ENCODE measurements at regions of chr7 and their contacts with region 1.

Region 1: GRCh38 chr7:50711257-50712175 is 71.2 kb downstream of the GRB10 start:
- DNase-seq: no peak
- ATAC-seq: no peak
- H3K4me3 ChIP-seq: no peak overlapping the region
- H3K27ac ChIP-seq: no peak overlapping the region
- H3K4me1 ChIP-seq: no peaks in the 10 kb centered on the region
- H3K27me3 ChIP-seq: no peaks in the 10 kb centered on the region
- CTCF ChIP-seq: no peak

Region 2: GRCh38 chr7:50615519-50616080 is 95.9 kb before region 1 on chr7:
- CTCF ChIA-PET with region 1: interaction called, 13 read pairs
- POLR2A ChIA-PET with region 1: no interaction called
- in situ Hi-C with region 1: no loop called
- intact Hi-C with region 1: no loop called
- DNase-seq: no peak
- ATAC-seq: no peak
- H3K4me3 ChIP-seq: no peak overlapping the region
- H3K27ac ChIP-seq: no peak overlapping the region
- H3K4me1 ChIP-seq: no peaks in the 10 kb centered on the region
- H3K27me3 ChIP-seq: no peaks in the 10 kb centered on the region
- CTCF ChIP-seq: no peak

Region 3: GRCh38 chr7:50739744-50740435 is 28.4 kb after region 1 on chr7:
- CTCF ChIA-PET with region 1: no interaction called
- POLR2A ChIA-PET with region 1: no interaction called
- in situ Hi-C with region 1: no loop called
- intact Hi-C with region 1: no loop called
- DNase-seq: no peak
- ATAC-seq: no peak
- H3K4me3 ChIP-seq: no peak overlapping the region
- H3K27ac ChIP-seq: no peak overlapping the region
- H3K4me1 ChIP-seq: no peaks in the 10 kb centered on the region
- H3K27me3 ChIP-seq: no peaks in the 10 kb centered on the region
- CTCF ChIP-seq: no peak

Region 4: DNA sequence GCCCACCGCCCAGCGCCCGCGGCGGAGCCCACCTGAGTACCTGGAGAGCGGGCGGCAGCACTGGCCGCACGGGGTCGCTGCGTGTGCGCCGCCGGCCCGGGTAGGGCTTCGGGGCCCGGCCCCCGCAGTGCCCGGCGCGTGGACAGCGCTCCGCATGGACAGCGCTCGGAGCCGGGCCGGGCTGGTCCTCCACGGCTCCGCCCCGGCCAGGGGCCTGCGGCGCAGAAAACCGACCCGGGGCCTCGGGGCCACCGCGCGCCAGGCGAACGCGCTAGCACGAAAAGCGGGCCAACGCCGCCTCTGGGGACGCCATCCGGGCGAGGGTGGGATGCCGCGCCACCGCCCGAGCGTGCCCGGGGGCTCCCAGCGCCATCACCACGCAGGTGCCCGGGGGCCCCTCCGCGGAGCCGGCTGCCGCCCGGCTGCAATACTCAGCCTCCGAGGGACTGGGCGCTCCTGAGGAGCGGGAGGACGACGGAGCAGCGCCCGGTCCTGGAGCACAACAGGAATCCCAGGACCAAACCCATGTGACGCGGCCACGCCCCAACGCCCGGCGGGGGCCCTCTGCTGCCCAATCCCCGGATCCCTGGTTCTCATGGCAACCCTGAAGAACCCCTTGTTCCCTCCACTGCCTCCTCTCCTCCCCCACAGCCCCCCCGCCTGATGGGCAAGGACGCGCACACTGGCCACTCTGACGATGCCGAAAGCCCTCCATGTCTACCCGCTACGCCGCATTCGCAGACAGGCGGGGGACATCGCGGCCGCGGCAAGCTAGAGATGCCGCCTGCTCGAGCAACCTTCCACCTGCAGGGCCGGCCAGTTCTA is 71.1 kb after region 1 on chr7 and contains the start of gene GRB10:
- CTCF ChIA-PET with region 1: no interaction called
- POLR2A ChIA-PET with region 1: no interaction called
- in situ Hi-C with region 1: no loop called
- intact Hi-C with region 1: loop called (anchors 10 kb)
- DNase-seq: no peak
- ATAC-seq: peak; percentile 86
- H3K4me3 ChIP-seq: peak within 1 kb of the TSS; percentile 44 to 58
- H3K27ac ChIP-seq: no peak within 1 kb of the TSS
- H3K4me1 ChIP-seq: no peaks in the 10 kb centered on the region
- H3K27me3 ChIP-seq: no peaks in the 10 kb centered on the region
- CTCF ChIP-seq: peak; percentile 85
- total RNA-seq, gene GRB10: 38.3 TPM

Measured in Panc1 (cell line).